ENCODE measurements at regions of chr10 and their contacts with region 1.

Region 1: GRCh38 chr10:68647672-68648341 is 73.2 kb upstream of the CCAR1 start:
- DNase-seq: no peak
- H3K4me3 ChIP-seq: no peak overlapping the region
- H3K27ac ChIP-seq: peak overlapping the region; percentile 45 to 60
- H3K4me1 ChIP-seq: no peaks in the 10 kb centered on the region
- H3K27me3 ChIP-seq: no peaks in the 10 kb centered on the region
- CTCF ChIP-seq: no peak
- POLR2A ChIP-seq: no peak

Region 2: GRCh38 chr10:67884313-67884841 is 763.4 kb before region 1 on chr10 and contains the start of gene SIRT1:
- intact Hi-C with region 1: loop called (anchors 5 kb)
- DNase-seq: peak; percentile 89 to 96
- H3K4me3 ChIP-seq: peak within 1 kb of the TSS; percentile 71 to 87 (median 82)
- H3K27ac ChIP-seq: peak within 1 kb of the TSS; percentile 97 to 98
- H3K4me1 ChIP-seq: no peaks in the 10 kb centered on the region
- H3K27me3 ChIP-seq: no peaks in the 10 kb centered on the region
- CTCF ChIP-seq: peak in 2 of 3 donors; percentile 9 to 13
- POLR2A ChIP-seq: peak; percentile 81
- total RNA-seq, gene SIRT1: 21.0 to 43.3 (median 35.5) TPM